PC-9 (cell line): ENCODE measurements at regions of chr4 and their contacts with region 1.

Region 1: DNA sequence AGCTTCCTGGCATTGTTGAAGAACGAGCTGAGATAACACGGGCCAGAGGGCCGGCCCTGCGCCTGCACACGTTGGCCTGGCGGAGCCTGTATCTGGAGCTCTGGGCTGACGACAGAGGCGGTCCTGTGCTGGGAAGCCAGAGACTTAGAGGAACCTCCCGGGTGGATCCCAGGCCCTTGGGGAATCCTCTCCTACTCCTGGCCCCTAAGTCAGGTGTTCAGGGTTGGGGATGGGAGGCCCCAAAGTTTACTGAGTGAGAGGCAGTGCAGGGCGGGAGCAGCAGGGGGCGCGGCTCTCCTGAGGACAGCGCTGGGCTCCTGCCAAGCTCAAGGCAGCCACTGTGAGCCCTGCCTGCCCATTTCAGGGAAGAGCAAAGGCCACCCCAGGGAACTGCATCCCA is 2.5 kb upstream of the HTRA3 start:
- DNase-seq: peak; percentile 44 to 78
- H3K4me3 ChIP-seq: no peak overlapping the region
- H3K27ac ChIP-seq: no peak overlapping the region
- H3K4me1 ChIP-seq: no peaks in the 10 kb centered on the region
- H3K27me3 ChIP-seq: peaks cover 23% of the 10 kb centered on the region
- CTCF ChIP-seq: peak; percentile 81

Region 2: GRCh38 chr4:8241895-8242696 is 25.0 kb before region 1 on chr4:
- CTCF ChIA-PET with region 1: interaction called, 3 read pairs
- POLR2A ChIA-PET with region 1: no interaction called
- intact Hi-C with region 1: loop called (anchors 1 kb)
- DNase-seq: peak in 1 of 2 experiments; percentile 85
- H3K4me3 ChIP-seq: no peak overlapping the region
- H3K27ac ChIP-seq: no peak overlapping the region
- H3K4me1 ChIP-seq: peaks cover 5% of the 10 kb centered on the region; the same call in 1 of the 2 replicates
- H3K27me3 ChIP-seq: no peaks in the 10 kb centered on the region
- CTCF ChIP-seq: peak; percentile 84

Region 3: GRCh38 chr4:8315435-8316250 is 48.6 kb after region 1 on chr4:
- CTCF ChIA-PET with region 1: no interaction called
- POLR2A ChIA-PET with region 1: no interaction called
- intact Hi-C with region 1: loop called (anchors 5 kb)
- DNase-seq: peak; percentile 84 to 89
- H3K4me3 ChIP-seq: peak overlapping the region; percentile 18; the same call in 1 of the 2 replicates
- H3K27ac ChIP-seq: peak overlapping the region; percentile 59
- H3K4me1 ChIP-seq: peaks cover 24% of the 10 kb centered on the region
- H3K27me3 ChIP-seq: no peaks in the 10 kb centered on the region
- CTCF ChIP-seq: no peak

Region 4: DNA sequence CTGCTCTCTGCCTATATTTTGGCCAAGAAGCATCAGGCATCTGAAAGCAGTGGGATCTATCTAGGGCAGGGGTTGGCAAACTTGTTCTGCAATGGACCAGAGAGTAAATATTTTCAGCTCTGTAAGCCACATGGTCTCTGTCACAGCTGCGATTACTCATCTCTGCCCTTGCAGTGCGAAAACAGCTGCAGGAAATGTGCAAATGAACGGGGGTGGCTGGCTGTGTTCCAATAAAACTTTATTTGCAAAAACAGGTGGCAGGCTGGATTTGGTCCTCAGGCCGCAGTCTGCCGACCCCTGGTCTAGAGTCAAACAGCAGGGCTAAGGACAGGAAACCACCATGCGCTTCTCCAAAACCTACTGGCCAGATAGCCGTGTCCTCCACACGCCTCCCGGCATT is 124.9 kb after region 1 on chr4:
- CTCF ChIA-PET with region 1: interaction called, 3 read pairs
- POLR2A ChIA-PET with region 1: interaction called, 11 read pairs
- intact Hi-C with region 1: no loop called
- DNase-seq: peak; percentile 45 to 78
- H3K4me3 ChIP-seq: no peak overlapping the region
- H3K27ac ChIP-seq: no peak overlapping the region
- H3K4me1 ChIP-seq: peaks cover 46% of the 10 kb centered on the region
- H3K27me3 ChIP-seq: no peaks in the 10 kb centered on the region
- CTCF ChIP-seq: no peak

Region 5: DNA sequence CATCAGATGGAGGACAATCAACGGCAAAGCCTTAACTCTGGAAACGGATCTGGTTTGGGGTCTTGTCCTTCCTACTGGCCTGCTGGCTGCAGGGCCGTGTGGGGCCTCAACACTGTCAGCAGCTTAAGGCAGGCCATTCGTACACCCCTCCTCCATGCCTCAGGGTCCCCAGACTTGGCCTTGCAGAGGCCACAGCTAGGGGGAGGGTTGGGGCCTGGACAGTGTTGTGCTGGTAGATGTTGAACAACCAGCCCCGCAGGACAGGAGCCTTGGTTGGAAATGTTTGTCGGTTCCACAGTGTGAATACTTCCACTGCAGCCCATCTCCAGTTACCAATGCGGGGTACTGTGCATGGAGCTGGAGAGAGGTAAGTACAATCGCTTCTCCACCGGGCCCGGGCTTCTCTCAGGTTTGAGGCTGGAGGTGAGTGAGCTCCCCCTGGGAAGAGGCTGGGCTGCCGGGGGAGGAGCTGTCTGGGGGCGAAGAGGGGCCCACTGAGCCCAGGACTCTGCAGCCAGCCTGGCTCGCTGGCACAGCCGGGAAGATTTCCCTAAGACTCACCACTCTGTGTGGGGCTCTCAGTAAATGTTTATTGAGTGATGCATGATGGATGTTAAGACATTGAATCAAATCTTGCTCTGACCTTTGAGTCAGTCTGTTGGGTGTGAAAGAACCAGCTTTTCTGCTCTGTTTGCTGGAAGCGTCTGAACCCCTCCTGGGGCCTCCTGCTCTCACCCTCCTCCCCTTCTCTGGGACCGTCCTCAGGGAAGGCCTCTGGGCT is 293.4 kb after region 1 on chr4:
- CTCF ChIA-PET with region 1: no interaction called
- POLR2A ChIA-PET with region 1: interaction called, 21 read pairs
- intact Hi-C with region 1: no loop called
- DNase-seq: peak; percentile 55 to 94
- H3K4me3 ChIP-seq: peak overlapping the region; percentile 69
- H3K27ac ChIP-seq: peak overlapping the region; percentile 95
- H3K4me1 ChIP-seq: peaks cover 74% of the 10 kb centered on the region
- H3K27me3 ChIP-seq: no peaks in the 10 kb centered on the region
- CTCF ChIP-seq: no peak

Region 6: DNA sequence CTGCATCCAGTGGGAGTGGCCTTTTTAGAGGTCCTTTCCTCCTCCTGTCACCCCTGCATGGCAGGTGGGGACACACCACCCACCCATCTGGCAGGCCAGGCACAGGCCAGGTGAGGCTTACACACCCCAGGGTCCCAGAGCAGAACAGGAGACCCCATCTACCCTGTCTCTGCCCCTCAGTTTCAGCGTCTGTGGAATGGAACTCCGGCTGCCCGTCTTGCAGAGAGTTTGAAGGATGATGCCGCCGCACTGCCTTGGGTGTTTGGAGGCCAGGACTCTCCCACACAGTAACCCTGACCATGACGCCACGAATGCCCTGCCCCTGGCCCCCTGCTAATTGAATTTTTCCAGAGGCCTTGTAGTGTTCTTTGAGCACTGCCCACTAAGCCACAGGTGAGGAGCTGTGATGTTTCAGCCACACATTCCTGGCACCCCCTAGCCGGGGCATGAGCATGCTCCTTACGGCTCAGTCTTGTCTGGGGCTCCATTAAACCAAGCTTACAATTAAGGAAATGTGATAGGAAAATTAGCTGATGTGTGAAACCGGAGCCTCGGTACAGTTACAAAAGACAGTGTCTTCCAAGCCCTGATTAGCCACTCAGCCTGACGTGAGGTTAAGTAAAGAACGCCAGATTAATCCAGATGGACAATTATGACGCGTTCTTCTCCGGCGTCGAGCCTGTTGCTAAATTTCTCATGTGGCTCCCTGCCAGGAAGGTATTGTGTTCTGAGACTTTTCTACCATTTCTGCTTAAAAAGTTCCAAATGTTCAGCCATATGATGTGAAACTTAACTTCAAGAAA is 565.2 kb after region 1 on chr4:
- CTCF ChIA-PET with region 1: no interaction called
- POLR2A ChIA-PET with region 1: no interaction called
- intact Hi-C with region 1: no loop called
- DNase-seq: no peak
- H3K4me3 ChIP-seq: no peak overlapping the region
- H3K27ac ChIP-seq: no peak overlapping the region
- H3K4me1 ChIP-seq: no peaks in the 10 kb centered on the region
- H3K27me3 ChIP-seq: peaks cover 70% of the 10 kb centered on the region
- CTCF ChIP-seq: no peak